HCT116 (cell line): ENCODE measurements at regions of chr12 and their contacts with region 1.

Region 1: GRCh38 chr12:46675736-46676135 is 150.1 kb downstream of the SLC38A4 start:
- DNase-seq: no peak
- ATAC-seq: peak; percentile 66
- H3K4me3 ChIP-seq: no peak overlapping the region
- H3K27ac ChIP-seq: peak overlapping the region; percentile 13; the same call in 1 of the 2 replicates
- H3K4me1 ChIP-seq: peaks cover 42 to 44% of the 10 kb centered on the region in 2 experiments
- H3K27me3 ChIP-seq: no peaks in the 10 kb centered on the region
- CTCF ChIP-seq: peak; percentile 44 to 61 (median 52); a peak in 5 of 6 replicates
- POLR2A ChIP-seq: no peak
- RAD21 ChIP-seq: peak; percentile 55

Region 2: DNA sequence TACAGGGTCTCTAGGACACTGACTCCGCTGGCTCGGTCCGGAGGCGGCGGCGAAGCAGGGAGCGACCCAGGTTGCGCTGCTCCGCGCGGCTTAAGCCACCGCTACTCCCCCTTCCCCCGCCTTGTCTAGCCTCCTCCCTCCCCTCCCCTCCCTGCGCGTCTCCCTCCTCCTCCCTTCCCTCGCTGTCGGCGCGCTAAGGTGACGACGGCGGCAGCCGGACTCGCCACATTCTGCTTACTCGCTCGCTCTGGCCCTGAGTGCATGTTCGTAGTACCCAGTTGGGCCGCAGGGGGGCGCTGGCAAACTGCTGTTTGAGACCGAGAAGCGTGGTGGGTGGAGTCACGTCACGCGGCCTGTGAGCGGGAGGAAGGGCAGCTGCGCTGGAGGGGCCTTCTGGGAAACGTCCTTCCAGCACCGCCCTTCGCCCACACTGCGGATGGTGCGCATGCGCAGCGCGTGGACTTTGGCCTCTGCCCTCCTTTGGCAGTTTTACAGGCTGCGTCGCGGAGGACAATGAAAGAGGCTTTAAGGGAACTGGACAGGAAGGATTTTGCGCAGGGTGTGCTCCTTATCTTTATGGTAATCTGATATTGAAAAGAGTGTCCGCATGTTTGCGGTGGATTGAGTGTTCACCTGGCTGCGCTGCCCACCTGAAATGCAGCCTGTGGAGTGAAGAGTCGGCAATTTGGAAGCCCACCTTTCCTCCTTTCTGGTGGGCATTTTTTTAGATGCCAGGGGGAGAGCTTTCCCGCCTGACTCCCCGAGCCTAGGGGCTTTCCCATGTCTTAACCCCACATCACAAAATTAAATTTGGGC is 685.1 kb before region 1 on chr12 and contains the start of gene SCAF11:
- CTCF ChIA-PET with region 1: no interaction called
- POLR2A ChIA-PET with region 1: no interaction called
- RAD21 ChIA-PET with region 1: no interaction called
- intact Hi-C with region 1: loop called (anchors 10 kb)
- DNase-seq: peak; percentile 100
- ATAC-seq: peak; percentile 84
- H3K4me3 ChIP-seq: peak within 1 kb of the TSS; percentile 85 to 89
- H3K27ac ChIP-seq: peak within 1 kb of the TSS; percentile 98
- H3K4me1 ChIP-seq: peaks cover 13 to 22% of the 10 kb centered on the region in 2 experiments
- H3K27me3 ChIP-seq: no peaks in the 10 kb centered on the region
- CTCF ChIP-seq: peak; percentile 81 to 92 (median 91); a peak in 5 of 6 replicates
- POLR2A ChIP-seq: peak; percentile 74
- RAD21 ChIP-seq: peak; percentile 98
- total RNA-seq, gene SCAF11: 79.8 TPM

Region 3: DNA sequence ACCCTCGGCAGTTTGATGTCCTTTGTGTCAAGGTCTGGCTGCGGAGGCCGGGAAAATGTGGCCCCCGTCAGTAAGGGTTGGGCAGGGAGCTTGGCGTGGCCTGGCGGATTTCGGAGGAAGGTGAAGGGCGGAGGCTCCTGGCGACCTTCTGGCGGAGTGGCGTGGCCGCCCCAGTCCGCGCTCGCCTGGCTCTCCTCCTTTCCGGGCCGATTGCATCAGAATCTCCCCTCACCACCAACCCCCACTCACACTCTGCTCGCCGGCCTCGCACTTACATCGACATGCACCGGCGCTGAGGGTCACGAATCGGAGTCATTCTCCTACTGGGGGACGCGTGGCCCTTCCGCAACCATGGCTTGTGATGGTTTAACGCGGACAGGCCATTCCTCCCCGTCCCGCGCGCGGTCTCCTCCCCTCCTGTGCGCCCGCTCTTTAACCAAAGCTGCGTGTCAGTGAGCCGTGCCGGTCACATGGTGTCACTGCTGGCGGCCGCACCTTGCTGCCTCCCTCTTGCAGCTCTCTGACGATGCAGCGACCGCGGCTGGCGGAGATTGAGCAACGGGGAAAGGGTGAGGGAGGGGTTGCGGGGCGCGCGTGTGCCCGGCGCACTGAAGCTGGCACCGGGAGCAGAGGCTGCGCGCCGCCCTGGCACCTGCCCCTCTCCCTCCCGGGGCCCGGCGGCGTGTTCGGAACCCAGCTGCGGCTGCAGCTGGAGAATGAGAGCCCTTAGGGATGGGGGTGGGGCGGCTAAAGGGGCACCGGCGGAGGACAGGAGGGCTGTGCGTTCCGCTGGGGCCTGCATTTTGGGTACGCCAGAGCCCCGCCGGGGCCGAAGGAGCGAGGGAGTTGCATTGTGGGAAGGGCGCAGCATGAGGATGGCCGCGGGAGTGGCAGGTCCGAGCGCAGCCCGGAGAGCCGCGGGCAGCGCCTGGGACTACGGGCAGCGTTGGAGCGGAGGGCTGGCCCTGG is 406.9 kb before region 1 on chr12 and contains the start of gene SLC38A1:
- CTCF ChIA-PET with region 1: no interaction called
- POLR2A ChIA-PET with region 1: no interaction called
- RAD21 ChIA-PET with region 1: no interaction called
- intact Hi-C with region 1: loop called (anchors 5 kb)
- DNase-seq: peak; percentile 62
- ATAC-seq: peak; percentile 80
- H3K4me3 ChIP-seq: peak within 1 kb of the TSS; percentile 69 to 95
- H3K27ac ChIP-seq: peak within 1 kb of the TSS; percentile 76
- H3K4me1 ChIP-seq: peaks cover 25 to 47% of the 10 kb centered on the region in 2 experiments
- H3K27me3 ChIP-seq: no peaks in the 10 kb centered on the region
- CTCF ChIP-seq: no peak
- POLR2A ChIP-seq: peak; percentile 63
- RAD21 ChIP-seq: 0 out of 2 replicates have a peak, but pooled peaks have one; percentile 8
- total RNA-seq, gene SLC38A1: 155 TPM

Region 4: GRCh38 chr12:46357438-46358324 is 318.1 kb before region 1 on chr12:
- CTCF ChIA-PET with region 1: interaction called, 3 read pairs
- POLR2A ChIA-PET with region 1: interaction called, 3 read pairs
- RAD21 ChIA-PET with region 1: no interaction called
- intact Hi-C with region 1: loop called (anchors 5 kb)
- DNase-seq: peak; percentile 84
- ATAC-seq: peak; percentile 65
- H3K4me3 ChIP-seq: no peak overlapping the region
- H3K27ac ChIP-seq: peak overlapping the region; percentile 24
- H3K4me1 ChIP-seq: peaks cover 0 to 19% of the 10 kb centered on the region in 2 experiments; a peak in 2 of 4 replicates
- H3K27me3 ChIP-seq: no peaks in the 10 kb centered on the region
- CTCF ChIP-seq: no peak
- POLR2A ChIP-seq: no peak
- RAD21 ChIP-seq: peak; percentile 22

Region 5: DNA sequence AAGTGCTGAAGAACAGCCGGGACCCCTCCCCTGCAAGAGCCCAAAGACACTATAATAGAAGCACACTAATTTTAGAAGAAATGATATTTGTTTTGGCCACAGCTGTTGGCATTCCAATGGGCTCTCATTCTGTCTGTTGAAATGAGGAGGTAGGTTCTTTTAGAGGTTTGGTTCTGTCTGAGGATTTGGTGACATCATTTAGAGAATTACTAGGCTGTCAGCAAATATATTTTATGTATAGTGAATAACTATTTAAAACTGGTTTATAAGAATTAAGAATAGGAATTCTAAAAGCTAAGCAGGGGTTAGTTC is 102.4 kb before region 1 on chr12:
- CTCF ChIA-PET with region 1: no interaction called
- POLR2A ChIA-PET with region 1: no interaction called
- RAD21 ChIA-PET with region 1: no interaction called
- intact Hi-C with region 1: no loop called
- DNase-seq: no peak
- ATAC-seq: no peak
- H3K4me3 ChIP-seq: no peak overlapping the region
- H3K27ac ChIP-seq: no peak overlapping the region
- H3K4me1 ChIP-seq: no peaks in the 10 kb centered on the region
- H3K27me3 ChIP-seq: no peaks in the 10 kb centered on the region
- CTCF ChIP-seq: no peak
- POLR2A ChIP-seq: no peak
- RAD21 ChIP-seq: no peak

Region 6: GRCh38 chr12:46983393-46984266 is 307.9 kb after region 1 on chr12:
- CTCF ChIA-PET with region 1: interaction called, 8 read pairs
- POLR2A ChIA-PET with region 1: no interaction called
- RAD21 ChIA-PET with region 1: no interaction called
- intact Hi-C with region 1: loop called (anchors 5 kb)
- DNase-seq: peak; percentile 56
- ATAC-seq: peak; percentile 97
- H3K4me3 ChIP-seq: no peak overlapping the region
- H3K27ac ChIP-seq: no peak overlapping the region
- H3K4me1 ChIP-seq: no peaks in the 10 kb centered on the region
- H3K27me3 ChIP-seq: no peaks in the 10 kb centered on the region
- CTCF ChIP-seq: peak; percentile 78 to 88 (median 84)
- POLR2A ChIP-seq: no peak
- RAD21 ChIP-seq: peak; percentile 89